ENCODE measurements at regions of chr2 and their contacts with region 1.

Region 1: GRCh38 chr2:221409594-221409993 is 162.5 kb downstream of the EPHA4 start:
- DNase-seq: no peak
- H3K4me3 ChIP-seq: no peak overlapping the region
- H3K27ac ChIP-seq: no peak overlapping the region
- H3K4me1 ChIP-seq: no peaks in the 10 kb centered on the region
- H3K27me3 ChIP-seq: no peaks in the 10 kb centered on the region
- CTCF ChIP-seq: no peak

Region 2: DNA sequence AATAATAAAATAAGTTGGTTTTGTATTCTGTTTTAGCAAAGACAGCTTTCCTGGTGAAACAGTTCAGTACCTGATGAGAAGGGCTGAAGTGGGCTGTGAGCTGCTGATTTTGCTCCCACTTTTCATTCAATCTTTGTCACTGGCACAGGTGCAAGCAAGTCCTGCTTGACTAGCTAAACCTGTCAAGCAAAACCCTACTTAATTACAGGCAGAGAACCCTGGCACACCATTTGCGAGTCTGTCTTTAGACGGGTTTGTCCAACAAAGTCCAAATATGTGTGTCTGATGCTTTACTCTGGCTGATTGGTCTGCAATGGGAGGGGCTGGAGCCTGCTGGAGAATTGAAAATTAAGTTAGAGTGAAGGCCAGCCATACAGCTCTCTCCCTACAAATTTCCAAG is 104.7 kb before region 1 on chr2:
- CTCF ChIA-PET with region 1: no interaction called
- POLR2A ChIA-PET with region 1: no interaction called
- intact Hi-C with region 1: no loop called
- DNase-seq: no peak
- H3K4me3 ChIP-seq: no peak overlapping the region
- H3K27ac ChIP-seq: no peak overlapping the region
- H3K4me1 ChIP-seq: no peaks in the 10 kb centered on the region
- H3K27me3 ChIP-seq: no peaks in the 10 kb centered on the region
- CTCF ChIP-seq: no peak

Region 3: GRCh38 chr2:221437056-221437455 is 27.5 kb after region 1 on chr2:
- CTCF ChIA-PET with region 1: interaction called, 10 read pairs
- POLR2A ChIA-PET with region 1: no interaction called
- intact Hi-C with region 1: no loop called
- DNase-seq: no peak
- H3K4me3 ChIP-seq: no peak overlapping the region
- H3K27ac ChIP-seq: no peak overlapping the region
- H3K4me1 ChIP-seq: peaks cover 15% of the 10 kb centered on the region
- H3K27me3 ChIP-seq: no peaks in the 10 kb centered on the region
- CTCF ChIP-seq: no peak